ENCODE measurements at regions of chr2 and their contacts with region 1.

Region 1: DNA sequence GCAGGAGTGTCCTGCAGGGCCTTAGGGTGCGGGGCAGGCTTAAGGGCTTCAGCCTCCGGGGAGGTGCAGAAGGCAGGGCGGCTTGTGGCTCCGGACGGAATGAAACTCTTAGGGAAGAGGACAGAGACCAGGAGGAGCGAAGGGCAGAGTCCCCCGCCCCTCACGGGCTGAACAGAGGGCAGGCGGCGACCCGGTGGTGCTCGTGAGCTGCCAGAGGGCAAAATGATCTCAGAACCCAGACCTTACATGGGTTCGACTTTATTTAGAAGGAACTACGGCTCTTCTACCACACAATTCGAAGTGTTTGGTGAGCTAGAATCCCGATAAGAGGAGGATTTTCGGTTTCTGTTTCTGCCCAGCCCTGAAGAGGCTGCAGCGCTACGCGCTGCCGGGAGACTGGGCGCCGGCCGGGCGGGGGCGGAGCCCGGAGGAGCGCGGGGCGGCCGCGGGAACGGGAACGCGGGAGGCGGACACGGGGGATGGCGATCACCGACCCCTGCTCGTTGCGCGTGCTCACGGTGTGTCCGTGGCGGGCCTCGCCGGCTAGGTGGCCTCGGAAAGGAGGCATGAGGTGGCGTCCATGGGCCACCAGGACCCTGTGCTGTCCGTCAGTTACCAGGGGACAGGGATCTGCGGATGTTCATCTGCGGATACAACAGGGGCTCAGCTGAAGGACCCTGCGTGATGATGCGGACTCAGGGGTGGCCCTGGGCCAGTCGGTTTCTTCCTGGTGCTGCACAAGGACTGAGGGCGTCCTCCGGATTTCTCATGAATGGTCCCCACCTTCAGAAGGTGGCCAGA is 4.2 kb upstream of the SP100 start:
- DNase-seq: peak; percentile 61
- ATAC-seq: peak; percentile 67
- H3K4me3 Mint-ChIP-seq: peak overlapping the region; percentile 99
- H3K27ac Mint-ChIP-seq: peak overlapping the region; percentile 99
- H3K4me1 Mint-ChIP-seq: peaks cover 74% of the 10 kb centered on the region
- H3K27me3 Mint-ChIP-seq: no peaks in the 10 kb centered on the region
- CTCF ChIP-seq: no peak

Region 2: DNA sequence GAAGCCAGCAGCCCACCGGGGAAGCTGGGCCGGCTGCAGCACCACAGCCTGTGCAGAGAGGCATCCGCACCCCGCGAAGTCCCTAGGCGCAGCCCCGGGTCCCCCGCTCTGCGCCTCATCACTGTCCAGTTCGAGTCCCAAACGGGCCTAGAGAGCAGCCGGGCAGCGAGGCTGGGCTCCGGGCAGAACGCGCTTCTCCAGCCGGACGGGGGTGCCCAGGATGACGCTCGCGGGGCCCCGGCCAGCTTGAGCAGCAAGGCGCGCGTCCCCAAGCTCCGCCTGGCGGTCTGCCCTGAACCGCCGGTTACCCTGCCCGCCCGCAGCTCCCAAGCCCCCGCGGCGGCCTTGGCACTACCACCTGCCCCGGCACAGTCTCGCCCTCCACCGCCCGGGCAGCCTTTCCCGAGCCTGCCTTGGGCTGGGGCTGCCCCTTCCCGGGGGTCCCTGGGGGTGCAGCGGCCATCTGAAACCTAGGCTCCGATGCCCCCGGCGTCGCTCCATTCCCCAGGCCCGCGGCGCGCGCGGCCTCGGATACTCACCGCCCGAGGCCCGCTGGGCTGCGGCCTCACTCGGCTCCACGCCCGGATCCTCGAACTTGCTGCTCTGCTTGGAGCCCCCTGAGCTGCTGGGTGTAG is 343.6 kb before region 1 on chr2:
- CTCF ChIA-PET with region 1: no interaction called
- POLR2A ChIA-PET with region 1: interaction called, 7 read pairs
- intact Hi-C with region 1: loop called (anchors 5 kb)
- DNase-seq: peak; percentile 58
- ATAC-seq: peak; percentile 32
- H3K4me3 Mint-ChIP-seq: peak overlapping the region; percentile 90
- H3K27ac Mint-ChIP-seq: peak overlapping the region; percentile 70
- H3K4me1 Mint-ChIP-seq: peaks cover 18% of the 10 kb centered on the region
- H3K27me3 Mint-ChIP-seq: peaks cover 5% of the 10 kb centered on the region
- CTCF ChIP-seq: no peak

Region 3: DNA sequence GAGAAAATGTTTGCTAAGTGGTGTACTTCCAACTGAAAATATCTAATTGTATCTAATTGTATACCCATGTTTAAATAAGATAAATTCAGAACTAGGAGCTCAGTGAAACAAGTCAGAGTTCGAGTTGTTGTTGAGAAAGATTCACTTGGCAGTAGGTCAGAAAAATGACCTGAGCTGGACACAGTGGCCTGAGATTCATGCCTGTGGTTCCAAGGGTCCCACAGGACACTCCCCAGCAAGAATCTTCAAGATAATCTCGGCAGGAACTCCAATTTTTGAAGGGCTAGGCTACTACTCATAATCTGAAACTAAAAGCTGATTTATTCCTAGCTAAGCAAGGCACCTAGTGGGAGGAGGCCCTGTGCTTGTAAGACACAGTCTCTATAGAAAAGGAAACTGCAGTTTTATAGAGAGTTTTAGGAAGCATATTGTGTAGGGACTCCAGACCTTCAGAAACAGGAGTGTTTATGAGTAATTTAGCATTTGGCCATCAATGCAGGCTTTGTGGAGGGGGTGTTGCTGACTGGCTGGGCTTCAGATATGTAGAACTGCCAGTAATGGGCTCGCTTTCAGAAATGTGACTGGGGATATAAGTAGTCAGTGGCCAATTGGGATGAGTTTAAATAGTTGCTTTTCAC is 143.0 kb before region 1 on chr2:
- CTCF ChIA-PET with region 1: no interaction called
- POLR2A ChIA-PET with region 1: interaction called, 3 read pairs
- intact Hi-C with region 1: loop called (anchors 5 kb)
- DNase-seq: no peak
- ATAC-seq: no peak
- H3K4me3 Mint-ChIP-seq: peak overlapping the region; percentile 60
- H3K27ac Mint-ChIP-seq: peak overlapping the region; percentile 92
- H3K4me1 Mint-ChIP-seq: peaks cover 81% of the 10 kb centered on the region
- H3K27me3 Mint-ChIP-seq: no peaks in the 10 kb centered on the region
- CTCF ChIP-seq: no peak

Region 4: DNA sequence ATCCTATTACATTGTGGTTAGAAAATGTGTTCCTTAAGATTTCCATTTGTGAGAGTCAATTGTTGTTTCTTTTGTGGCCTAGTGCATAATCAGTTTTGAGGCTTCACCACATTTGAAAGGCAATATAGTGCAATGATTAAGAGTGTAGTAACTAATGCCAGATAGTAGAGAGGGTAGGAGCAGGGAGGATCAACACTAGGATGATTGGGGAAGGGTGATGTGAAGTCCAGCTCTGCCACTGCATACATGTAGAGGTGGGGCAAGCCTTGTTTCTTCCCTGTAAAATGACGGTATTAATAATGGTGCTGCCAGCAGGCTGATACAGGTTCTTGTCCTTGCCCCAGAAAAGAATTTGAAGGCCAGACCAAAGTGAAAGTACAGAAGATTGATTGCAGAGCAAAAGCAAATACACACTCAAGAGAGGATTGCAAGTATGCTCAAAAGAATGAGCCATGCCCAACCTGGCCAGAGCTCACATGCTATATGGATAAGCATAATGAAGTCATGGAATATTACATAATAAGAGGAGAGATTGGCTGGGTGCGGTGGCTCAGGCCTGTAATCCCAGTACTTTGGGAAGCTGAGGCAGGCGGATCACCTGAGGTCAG is 12.2 kb after region 1 on chr2:
- CTCF ChIA-PET with region 1: no interaction called
- POLR2A ChIA-PET with region 1: interaction called, 4 read pairs
- intact Hi-C with region 1: loop called (anchors 1 kb)
- DNase-seq: no peak
- ATAC-seq: no peak
- H3K4me3 Mint-ChIP-seq: peak overlapping the region; percentile 51
- H3K27ac Mint-ChIP-seq: peak overlapping the region; percentile 64
- H3K4me1 Mint-ChIP-seq: peaks cover 90% of the 10 kb centered on the region
- H3K27me3 Mint-ChIP-seq: no peaks in the 10 kb centered on the region
- CTCF ChIP-seq: no peak

Region 5: GRCh38 chr2:230441227-230441897 is 29.6 kb after region 1 on chr2:
- CTCF ChIA-PET with region 1: no interaction called
- POLR2A ChIA-PET with region 1: interaction called, 47 read pairs
- intact Hi-C with region 1: loop called (anchors 1 kb)
- DNase-seq: no peak
- ATAC-seq: peak; percentile 81
- H3K4me3 Mint-ChIP-seq: peak overlapping the region; percentile 62
- H3K27ac Mint-ChIP-seq: peak overlapping the region; percentile 93
- H3K4me1 Mint-ChIP-seq: peaks cover 80% of the 10 kb centered on the region
- H3K27me3 Mint-ChIP-seq: no peaks in the 10 kb centered on the region
- CTCF ChIP-seq: no peak

Region 6: GRCh38 chr2:230472621-230473018 is 60.9 kb after region 1 on chr2:
- CTCF ChIA-PET with region 1: no interaction called
- POLR2A ChIA-PET with region 1: interaction called, 7 read pairs
- intact Hi-C with region 1: loop called (anchors 1 kb)
- DNase-seq: no peak
- ATAC-seq: peak; percentile 75
- H3K4me3 Mint-ChIP-seq: peak overlapping the region; percentile 17
- H3K27ac Mint-ChIP-seq: peak overlapping the region; percentile 89
- H3K4me1 Mint-ChIP-seq: peaks cover 56% of the 10 kb centered on the region
- H3K27me3 Mint-ChIP-seq: no peaks in the 10 kb centered on the region
- CTCF ChIP-seq: no peak

Region 7: GRCh38 chr2:230602562-230603230 is 190.9 kb after region 1 on chr2:
- CTCF ChIA-PET with region 1: no interaction called
- POLR2A ChIA-PET with region 1: interaction called, 18 read pairs
- intact Hi-C with region 1: no loop called
- DNase-seq: peak; percentile 41
- ATAC-seq: peak; percentile 80
- H3K4me3 Mint-ChIP-seq: peak overlapping the region; percentile 66
- H3K27ac Mint-ChIP-seq: peak overlapping the region; percentile 96
- H3K4me1 Mint-ChIP-seq: peaks cover 94% of the 10 kb centered on the region
- H3K27me3 Mint-ChIP-seq: no peaks in the 10 kb centered on the region
- CTCF ChIP-seq: no peak